ENCODE measurements at regions of chr7 and their contacts with region 1.

Region 1: DNA sequence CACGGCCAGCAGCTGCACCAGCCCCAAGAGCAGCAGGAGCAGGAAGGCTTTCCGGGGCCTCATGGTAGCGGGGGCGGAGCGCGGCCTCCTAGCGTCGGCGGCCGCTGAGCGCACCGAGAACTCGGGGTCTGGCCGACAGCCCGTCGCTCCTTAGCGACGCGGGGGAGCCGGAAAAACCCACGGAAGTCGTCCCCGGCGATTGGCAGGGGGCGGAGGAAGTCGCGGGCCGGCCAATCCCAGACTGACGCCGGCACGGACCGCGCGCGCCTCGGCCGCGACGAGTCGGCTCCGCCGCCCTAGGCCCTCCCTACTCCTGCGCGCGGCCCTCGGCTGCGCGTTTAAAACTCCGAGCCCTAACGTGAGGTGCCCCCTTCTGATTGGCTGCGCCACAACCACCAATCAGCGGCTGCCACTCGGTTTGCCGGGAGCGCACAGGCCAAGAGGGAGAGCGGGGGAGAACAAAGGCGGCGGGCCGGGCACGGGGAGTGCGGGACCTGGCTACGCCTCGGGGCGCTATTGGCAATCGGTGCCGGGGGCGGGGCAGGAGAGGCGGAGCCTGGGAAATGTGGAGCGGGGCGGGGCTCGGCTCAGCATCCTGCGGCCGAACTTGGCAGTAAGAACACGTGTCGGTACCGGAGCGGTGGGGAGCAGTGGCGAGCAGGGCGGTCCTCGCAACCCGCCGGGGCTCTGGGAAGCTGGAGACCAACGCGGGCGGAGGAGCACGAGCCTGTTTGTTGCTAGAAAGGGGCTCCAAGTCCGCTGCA is at the start of gene PDIA4:
- DNase-seq: peak; percentile 98 to 100
- H3K4me3 ChIP-seq: peak within 1 kb of the TSS; percentile 67 to 100
- H3K27ac ChIP-seq: peak within 1 kb of the TSS; percentile 83 to 95
- H3K4me1 ChIP-seq: peaks cover 0 to 8% of the 10 kb centered on the region in 2 donors
- H3K27me3 ChIP-seq: no peaks in the 10 kb centered on the region
- CTCF ChIP-seq: peak in 2 of 3 experiments; percentile 13 to 23
- total RNA-seq, gene PDIA4: 129 TPM

Region 2: GRCh38 chr7:148698397-148699023 is 330.0 kb before region 1 on chr7 and contains the start of gene CUL1:
- intact Hi-C with region 1: loop called (anchors 1 kb)
- DNase-seq: peak; percentile 36 to 92
- H3K4me3 ChIP-seq: peak within 1 kb of the TSS; percentile 97 to 99
- H3K27ac ChIP-seq: peak within 1 kb of the TSS; percentile 99 to 100
- H3K4me1 ChIP-seq: peaks cover 4 to 30% of the 10 kb centered on the region in 2 donors
- H3K27me3 ChIP-seq: no peaks in the 10 kb centered on the region
- CTCF ChIP-seq: no peak
- total RNA-seq, gene CUL1: 16.3 TPM

Region 3: GRCh38 chr7:148738737-148739535 is 289.6 kb before region 1 on chr7:
- intact Hi-C with region 1: no loop called
- DNase-seq: no peak
- H3K4me3 ChIP-seq: no peak overlapping the region
- H3K27ac ChIP-seq: no peak overlapping the region
- H3K4me1 ChIP-seq: peaks cover 0 to 2% of the 10 kb centered on the region in 2 donors
- H3K27me3 ChIP-seq: no peaks in the 10 kb centered on the region
- CTCF ChIP-seq: no peak

Region 4: GRCh38 chr7:148962823-148963582 is 65.5 kb before region 1 on chr7:
- intact Hi-C with region 1: loop called (anchors 2 kb)
- DNase-seq: peak in 1 of 2 donors; percentile 77
- H3K4me3 ChIP-seq: peak overlapping the region; percentile 65 to 71
- H3K27ac ChIP-seq: peak overlapping the region; percentile 68 to 79
- H3K4me1 ChIP-seq: peaks cover 0 to 2% of the 10 kb centered on the region in 2 donors
- H3K27me3 ChIP-seq: no peaks in the 10 kb centered on the region
- CTCF ChIP-seq: peak; percentile 46 to 73 (median 67)

Region 5: GRCh38 chr7:149005241-149006050 is 23.1 kb before region 1 on chr7:
- intact Hi-C with region 1: loop called (anchors 2 kb)
- DNase-seq: peak in 1 of 2 donors; percentile 89
- H3K4me3 ChIP-seq: no peak overlapping the region
- H3K27ac ChIP-seq: no peak overlapping the region
- H3K4me1 ChIP-seq: no peaks in the 10 kb centered on the region
- H3K27me3 ChIP-seq: no peaks in the 10 kb centered on the region
- CTCF ChIP-seq: peak; percentile 79 to 94 (median 86)

Region 6: GRCh38 chr7:149050941-149051340 is 22.4 kb after region 1 on chr7:
- intact Hi-C with region 1: no loop called
- DNase-seq: no peak
- H3K4me3 ChIP-seq: no peak overlapping the region
- H3K27ac ChIP-seq: no peak overlapping the region
- H3K4me1 ChIP-seq: no peaks in the 10 kb centered on the region
- H3K27me3 ChIP-seq: no peaks in the 10 kb centered on the region
- CTCF ChIP-seq: no peak

Region 7: DNA sequence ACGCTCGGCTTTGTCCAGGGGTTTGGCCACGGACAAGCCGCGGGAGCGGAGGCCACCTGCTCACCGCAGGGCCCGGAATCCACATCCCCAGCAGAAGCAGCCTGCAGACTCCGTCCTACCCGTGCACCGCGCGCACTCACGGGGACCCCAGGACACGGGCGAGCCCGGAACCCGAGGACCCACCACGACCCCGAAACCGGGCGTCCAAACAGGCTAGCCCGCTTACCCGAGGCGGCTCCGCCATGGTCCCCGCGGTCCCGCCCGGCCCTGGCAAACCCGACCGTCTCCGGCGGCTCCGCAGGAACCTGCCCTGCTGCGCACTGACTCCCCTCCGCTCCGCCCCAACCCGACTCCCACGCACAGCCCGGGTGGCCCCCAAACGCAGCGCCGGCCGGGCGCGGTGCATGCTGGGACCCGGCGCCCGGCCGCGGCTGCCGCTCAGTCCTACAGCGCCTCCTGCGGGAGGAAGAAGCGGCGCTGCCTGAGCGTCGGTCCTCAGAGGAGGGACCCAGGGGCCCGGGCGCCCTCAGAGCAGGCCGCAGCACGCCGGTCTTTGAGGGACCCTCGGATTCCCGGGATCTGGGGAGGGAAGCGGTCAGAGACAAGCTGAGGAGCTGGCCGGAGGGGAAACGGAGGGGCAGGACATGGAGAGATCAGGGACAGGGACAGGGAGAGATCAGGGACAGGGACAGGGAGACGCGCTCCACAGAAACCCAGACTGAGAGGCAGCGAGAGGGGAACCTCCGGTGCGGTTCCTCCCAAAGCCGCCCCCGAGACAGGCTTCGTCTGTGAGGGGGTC is 62.1 kb after region 1 on chr7 and contains the start of gene ZNF786:
- intact Hi-C with region 1: loop called (anchors 1 kb)
- DNase-seq: peak; percentile 29 to 92
- H3K4me3 ChIP-seq: peak within 1 kb of the TSS; percentile 95 to 97
- H3K27ac ChIP-seq: peak within 1 kb of the TSS; percentile 96 to 97
- H3K4me1 ChIP-seq: peaks cover 0 to 7% of the 10 kb centered on the region in 2 donors
- H3K27me3 ChIP-seq: no peaks in the 10 kb centered on the region
- CTCF ChIP-seq: peak; percentile 91 to 97 (median 94)
- total RNA-seq, gene ZNF786: 8.4 TPM

Region 8: DNA sequence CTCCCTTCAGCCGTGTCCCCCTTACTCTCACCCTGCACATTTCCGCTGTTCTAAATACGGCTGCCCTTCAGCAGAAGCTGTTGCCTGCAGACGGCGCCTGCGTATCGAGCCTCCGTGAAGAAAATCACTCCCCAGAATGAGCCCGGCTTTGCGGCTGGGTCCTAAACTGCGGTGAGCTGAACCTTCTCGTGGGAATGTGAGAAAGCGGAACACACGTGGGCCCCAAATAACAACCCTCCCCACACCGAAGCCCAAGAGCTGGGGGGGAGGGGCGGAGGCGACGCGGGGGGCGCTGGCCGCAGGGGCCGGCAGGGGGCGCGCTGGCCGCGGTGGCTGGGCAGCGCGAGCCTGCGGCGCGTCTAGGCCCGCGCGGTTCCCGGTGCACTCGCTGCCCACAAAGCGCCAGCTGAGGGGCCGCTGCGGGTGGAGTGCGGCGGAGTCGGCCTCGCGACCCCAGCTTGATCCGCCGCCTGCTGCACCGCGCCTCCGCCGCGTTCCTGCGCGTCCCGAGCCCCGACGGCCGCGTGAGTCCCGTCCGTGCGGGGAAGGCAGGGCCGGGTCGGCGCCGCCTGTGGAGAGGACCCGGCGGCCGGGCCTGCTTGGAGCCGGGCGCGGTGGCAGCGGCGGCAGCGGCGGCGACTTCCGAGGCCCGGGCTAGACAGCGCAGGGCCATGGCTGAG is 118.7 kb after region 1 on chr7 and contains the start of gene ZNF398:
- intact Hi-C with region 1: loop called (anchors 2 kb)
- DNase-seq: peak in 1 of 2 donors; percentile 85
- H3K4me3 ChIP-seq: peak within 1 kb of the TSS; percentile 90 to 96
- H3K27ac ChIP-seq: peak within 1 kb of the TSS; percentile 80 to 92
- H3K4me1 ChIP-seq: peaks cover 0 to 14% of the 10 kb centered on the region in 2 donors
- H3K27me3 ChIP-seq: no peaks in the 10 kb centered on the region
- CTCF ChIP-seq: peak; percentile 48 to 77 (median 49)
- total RNA-seq, gene ZNF398: 19.6 TPM

Region 9: GRCh38 chr7:149261829-149262617 is 233.5 kb after region 1 on chr7 and contains the start of gene ZNF783:
- intact Hi-C with region 1: loop called (anchors 2 kb)
- DNase-seq: peak; percentile 44 to 93
- H3K4me3 ChIP-seq: peak within 1 kb of the TSS; percentile 72 to 91
- H3K27ac ChIP-seq: peak within 1 kb of the TSS; percentile 86 to 95
- H3K4me1 ChIP-seq: peaks cover 3 to 12% of the 10 kb centered on the region in 2 donors
- H3K27me3 ChIP-seq: no peaks in the 10 kb centered on the region
- CTCF ChIP-seq: peak; percentile 49 to 93 (median 67)
- total RNA-seq, gene ZNF783: 25.7 TPM

Measured in ascending aorta (tissue), 2 donors.